ENCODE measurements at regions of chr2 and their contacts with region 1.

Region 1: GRCh38 chr2:147843864-147844696 is 749 bp upstream of the ACVR2A start:
- DNase-seq: peak; percentile 95
- H3K4me3 ChIP-seq: peak overlapping the region; percentile 77 to 86
- H3K27ac ChIP-seq: peak overlapping the region; percentile 92 to 96
- H3K4me1 ChIP-seq: peaks cover 0 to 8% of the 10 kb centered on the region in 2 experiments; a peak in 2 of 4 replicates
- H3K27me3 ChIP-seq: no peaks in the 10 kb centered on the region; the same call in 1 of the 2 replicates
- CTCF ChIP-seq: peak; percentile 35; the same call in 1 of the 2 replicates
- EP300 ChIP-seq: peak in 1 of 2 experiments; percentile 27; a peak in 1 of 4 replicates
- RAD21 ChIP-seq: peak; percentile 18; the same call in 1 of the 2 replicates

Region 2: GRCh38 chr2:147910990-147911473 is 67.0 kb after region 1 on chr2:
- CTCF ChIA-PET with region 1: interaction called, 13 read pairs
- POLR2A ChIA-PET with region 1: interaction called, 4 read pairs
- DNase-seq: no peak
- H3K4me3 ChIP-seq: no peak overlapping the region; a peak in 1 of 4 replicates
- H3K27ac ChIP-seq: no peak overlapping the region
- H3K4me1 ChIP-seq: peaks cover 16 to 18% of the 10 kb centered on the region in 2 experiments; a peak in 3 of 4 replicates
- H3K27me3 ChIP-seq: no peaks in the 10 kb centered on the region
- CTCF ChIP-seq: peak; percentile 87
- EP300 ChIP-seq: no peak
- RAD21 ChIP-seq: peak; percentile 89